ENCODE measurements at regions of chr9 and their contacts with region 1.

Region 1: GRCh38 chr9:37913480-37914153 is 9.7 kb upstream of the SLC25A51 start:
- DNase-seq: peak; percentile 89
- H3K4me3 Mint-ChIP-seq: no peak overlapping the region
- H3K27ac Mint-ChIP-seq: no peak overlapping the region
- H3K4me1 Mint-ChIP-seq: peaks cover 2% of the 10 kb centered on the region
- H3K27me3 Mint-ChIP-seq: no peaks in the 10 kb centered on the region

Region 2: GRCh38 chr9:38160613-38161215 is 247.1 kb after region 1 on chr9:
- CTCF ChIA-PET with region 1: interaction called, 41 read pairs
- intact Hi-C with region 1: loop called (anchors 1 kb)
- DNase-seq: peak; percentile 79
- H3K4me3 Mint-ChIP-seq: no peak overlapping the region
- H3K27ac Mint-ChIP-seq: no peak overlapping the region
- H3K4me1 Mint-ChIP-seq: no peaks in the 10 kb centered on the region
- H3K27me3 Mint-ChIP-seq: no peaks in the 10 kb centered on the region

Region 3: DNA sequence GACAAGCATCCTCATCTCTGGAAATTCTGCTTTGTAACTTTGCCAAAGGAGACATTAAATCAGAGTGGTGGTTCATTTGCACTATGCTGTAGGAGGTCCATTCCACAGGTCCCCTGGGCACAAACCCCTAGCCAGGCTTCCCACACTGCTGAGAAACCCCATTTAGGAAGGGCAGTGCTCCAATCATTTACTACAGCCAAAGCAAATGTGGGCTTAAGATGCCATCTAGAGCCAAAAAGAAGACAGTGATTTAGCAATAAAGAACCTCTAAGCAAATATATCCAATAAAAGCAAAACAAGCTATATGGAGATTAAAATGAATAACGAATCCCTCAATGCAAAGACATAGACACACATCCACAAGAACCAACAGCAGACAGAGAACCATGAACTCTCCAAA is 349.9 kb after region 1 on chr9:
- CTCF ChIA-PET with region 1: no interaction called
- intact Hi-C with region 1: loop called (anchors 10 kb)
- DNase-seq: no peak
- H3K4me3 Mint-ChIP-seq: no peak overlapping the region
- H3K27ac Mint-ChIP-seq: no peak overlapping the region
- H3K4me1 Mint-ChIP-seq: no peaks in the 10 kb centered on the region
- H3K27me3 Mint-ChIP-seq: peaks cover 14% of the 10 kb centered on the region

Region 4: GRCh38 chr9:38362852-38363593 is 449.4 kb after region 1 on chr9:
- CTCF ChIA-PET with region 1: no interaction called
- intact Hi-C with region 1: loop called (anchors 1 kb)
- DNase-seq: peak; percentile 41
- H3K4me3 Mint-ChIP-seq: peak overlapping the region; percentile 58
- H3K27ac Mint-ChIP-seq: no peak overlapping the region
- H3K4me1 Mint-ChIP-seq: peaks cover 5% of the 10 kb centered on the region
- H3K27me3 Mint-ChIP-seq: peaks cover 2% of the 10 kb centered on the region

Region 5: DNA sequence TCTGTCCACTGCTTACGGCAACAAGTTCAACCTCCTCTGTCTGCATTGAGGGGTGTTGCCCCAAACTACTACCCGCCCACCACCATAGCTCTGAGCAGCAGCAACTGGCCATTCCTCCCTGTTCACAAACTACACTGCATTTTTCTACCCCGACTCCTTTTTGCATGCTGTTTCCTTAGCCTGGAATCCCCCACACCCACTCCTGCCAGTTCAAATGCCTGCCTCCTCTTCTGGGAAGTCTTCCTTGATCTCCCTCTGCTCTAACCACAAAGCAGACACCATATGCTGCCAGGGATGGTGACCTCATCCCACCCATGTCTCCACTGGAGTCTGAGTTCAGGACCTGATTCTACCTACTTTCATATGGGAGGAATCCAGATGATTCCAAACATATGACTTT is 492.2 kb after region 1 on chr9:
- CTCF ChIA-PET with region 1: no interaction called
- intact Hi-C with region 1: loop called (anchors 1 kb)
- DNase-seq: no peak
- H3K4me3 Mint-ChIP-seq: no peak overlapping the region
- H3K27ac Mint-ChIP-seq: no peak overlapping the region
- H3K4me1 Mint-ChIP-seq: no peaks in the 10 kb centered on the region
- H3K27me3 Mint-ChIP-seq: peaks cover 3% of the 10 kb centered on the region

Measured in activated naive CD4-positive, alpha-beta T cell treated with anti-CD3 and anti-CD28 coated beads for 36 hours (primary cell).